Heart left ventricle (tissue), 16 donors: ENCODE measurements at regions of chr3 and their contacts with region 1.

Region 1: GRCh38 chr3:9362731-9363530 is at the start of gene THUMPD3:
- DNase-seq: peak; percentile 91 to 95 (median 94)
- ATAC-seq: peak; percentile 97 to 99 (median 99)
- H3K4me3 ChIP-seq: peak within 1 kb of the TSS; percentile 41 to 87 (median 72)
- H3K27ac ChIP-seq: peak within 1 kb of the TSS; percentile 79 to 97 (median 88)
- H3K4me1 ChIP-seq: peaks cover 0 to 27% (median 14%) of the 10 kb centered on the region in 12 donors
- H3K27me3 ChIP-seq: no peaks in the 10 kb centered on the region
- CTCF ChIP-seq: peak in 3 of 12 donors; percentile 6 to 24 (median 11)
- POLR2A ChIP-seq: peak in 1 of 2 donors; percentile 76
- total RNA-seq, gene THUMPD3: 25.3 to 65.5 (median 51.5) TPM

Region 2: GRCh38 chr3:8560366-8561007 is 802.4 kb before region 1 on chr3:
- intact Hi-C with region 1: no loop called
- DNase-seq: peak in 1 of 5 donors; percentile 70
- ATAC-seq: peak; percentile 44 to 77 (median 63)
- H3K4me3 ChIP-seq: no peak overlapping the region
- H3K27ac ChIP-seq: peak overlapping the region; percentile 9 to 87 (median 70)
- H3K4me1 ChIP-seq: peaks cover 6 to 76% (median 47%) of the 10 kb centered on the region in 12 donors
- H3K27me3 ChIP-seq: no peaks in the 10 kb centered on the region
- CTCF ChIP-seq: no peak
- POLR2A ChIP-seq: no peak

Region 3: GRCh38 chr3:9396700-9397521 is 34.0 kb after region 1 on chr3:
- intact Hi-C with region 1: loop called in 5 of 10 experiments (anchors 2 to 5 kb)
- DNase-seq: peak; percentile 99
- ATAC-seq: peak; percentile 85 to 91 (median 90)
- H3K4me3 ChIP-seq: peak overlapping the region; percentile 51 to 98 (median 89)
- H3K27ac ChIP-seq: peak overlapping the region; percentile 95 to 99 (median 99)
- H3K4me1 ChIP-seq: peaks cover 18 to 74% (median 65%) of the 10 kb centered on the region in 12 donors
- H3K27me3 ChIP-seq: no peaks in the 10 kb centered on the region
- CTCF ChIP-seq: no peak
- POLR2A ChIP-seq: peak; percentile 18 to 84

Region 4: DNA sequence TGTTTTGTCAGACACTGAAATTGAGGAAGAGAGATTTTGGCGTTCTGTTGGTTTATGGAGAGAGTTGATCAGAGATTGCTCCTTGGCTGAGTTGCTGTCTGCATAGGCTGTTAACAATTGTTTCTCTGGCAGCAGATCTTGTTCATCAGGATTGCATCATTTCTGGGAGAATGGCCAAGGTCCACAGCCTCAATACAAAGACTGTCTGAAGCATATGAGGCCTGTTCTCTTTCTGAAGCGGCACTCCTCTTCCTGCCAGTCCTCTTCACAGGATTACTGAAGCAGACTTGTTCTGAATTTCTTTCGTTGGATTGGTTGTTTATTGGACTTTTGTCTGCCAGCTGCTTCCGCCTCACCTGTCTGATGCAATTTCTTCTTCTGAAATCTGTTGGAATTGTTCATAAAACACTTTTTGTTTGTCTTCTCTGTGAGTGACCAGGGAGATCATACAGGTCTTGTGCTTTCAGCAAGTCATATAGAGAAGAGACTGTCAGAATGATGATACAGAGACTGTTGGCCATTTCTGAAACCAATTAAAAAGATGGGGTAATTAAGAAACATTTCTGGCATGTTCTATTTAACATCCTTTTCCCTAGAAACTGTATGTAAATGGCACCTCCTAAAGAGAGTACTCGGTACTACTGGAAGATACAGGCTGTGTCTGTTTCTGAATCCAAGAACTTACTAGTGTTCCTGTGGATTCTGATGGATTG is 59.9 kb after region 1 on chr3:
- intact Hi-C with region 1: loop called in 3 of 10 experiments (anchors 5 to 10 kb)
- DNase-seq: peak in 4 of 5 donors; percentile 83 to 91 (median 88)
- ATAC-seq: peak; percentile 91 to 98 (median 96)
- H3K4me3 ChIP-seq: peak overlapping the region in 3 of 12 donors; percentile 6 to 31 (median 11)
- H3K27ac ChIP-seq: peak overlapping the region; percentile 14 to 86 (median 78)
- H3K4me1 ChIP-seq: peaks cover 12 to 76% (median 47%) of the 10 kb centered on the region in 12 donors
- H3K27me3 ChIP-seq: no peaks in the 10 kb centered on the region
- CTCF ChIP-seq: peak; percentile 17 to 66 (median 49)
- POLR2A ChIP-seq: no peak

Region 5: GRCh38 chr3:9430733-9431132 is 67.8 kb after region 1 on chr3:
- intact Hi-C with region 1: loop called in 3 of 10 experiments (anchors 5 to 10 kb)
- DNase-seq: no peak
- ATAC-seq: no peak
- H3K4me3 ChIP-seq: no peak overlapping the region
- H3K27ac ChIP-seq: no peak overlapping the region
- H3K4me1 ChIP-seq: peaks cover 0 to 23% (median 3%) of the 10 kb centered on the region in 12 donors
- H3K27me3 ChIP-seq: no peaks in the 10 kb centered on the region
- CTCF ChIP-seq: no peak
- POLR2A ChIP-seq: no peak

Region 6: DNA sequence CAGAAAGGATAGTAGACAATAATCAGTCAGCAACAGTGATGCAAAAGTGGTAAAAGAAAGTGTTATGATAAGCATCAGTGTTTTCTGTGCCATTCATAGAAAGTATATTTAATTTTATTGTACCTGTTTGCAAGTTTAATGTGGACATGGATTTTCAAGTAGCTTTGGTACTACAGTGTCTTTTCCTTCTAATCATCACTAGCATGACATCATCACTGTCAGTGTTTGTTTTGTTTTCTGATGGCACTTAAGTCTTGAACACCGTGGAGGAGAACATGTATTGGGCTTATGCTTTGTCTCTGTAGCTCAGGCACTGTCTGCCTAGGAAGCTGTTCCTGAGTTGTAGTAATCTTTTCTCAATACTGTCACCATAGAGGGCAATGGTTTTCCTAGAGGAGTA is 76.4 kb after region 1 on chr3:
- intact Hi-C with region 1: loop called in 1 of 10 experiments (anchors 5 kb)
- DNase-seq: no peak
- ATAC-seq: peak in 2 of 4 donors; percentile 48 to 54
- H3K4me3 ChIP-seq: no peak overlapping the region
- H3K27ac ChIP-seq: no peak overlapping the region
- H3K4me1 ChIP-seq: peaks cover 0 to 20% (median 1%) of the 10 kb centered on the region in 12 donors
- H3K27me3 ChIP-seq: no peaks in the 10 kb centered on the region
- CTCF ChIP-seq: no peak
- POLR2A ChIP-seq: no peak